HepG2 (cell line): ENCODE measurements at regions of chr18 and their contacts with region 1.

Region 1: GRCh38 chr18:27363872-27364271 is 178.8 kb upstream of the CHST9 start:
- DNase-seq: peak; percentile 10
- ATAC-seq: peak; percentile 58; the same call in 2 of the 3 replicates
- H3K4me3 ChIP-seq: no peak overlapping the region
- H3K27ac ChIP-seq: no peak overlapping the region
- H3K4me1 ChIP-seq: no peaks in the 10 kb centered on the region
- H3K27me3 ChIP-seq: no peaks in the 10 kb centered on the region
- CTCF ChIP-seq: peak; percentile 41
- EP300 ChIP-seq: no peak
- POLR2A ChIP-seq: no peak
- RAD21 ChIP-seq: no peak

Region 2: DNA sequence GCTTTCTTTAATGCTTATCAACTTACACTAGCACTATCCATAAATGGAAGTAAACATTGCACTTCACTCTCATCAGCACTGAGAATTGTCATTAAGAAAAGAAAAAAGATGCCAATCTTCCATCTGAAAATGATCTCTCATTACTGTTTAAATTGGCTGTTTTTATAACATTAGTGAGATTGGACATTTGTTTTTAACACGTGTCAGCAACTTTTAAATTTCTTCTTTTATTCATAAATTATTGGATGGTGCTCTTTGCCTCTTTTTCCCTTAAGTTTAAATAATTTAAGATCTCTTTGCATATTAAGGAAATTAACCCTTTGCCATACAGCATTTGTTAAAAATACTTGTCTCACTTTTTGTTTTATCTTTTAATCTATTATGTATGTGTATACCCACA is 32.3 kb before region 1 on chr18:
- CTCF ChIA-PET with region 1: no interaction called
- POLR2A ChIA-PET with region 1: no interaction called
- in situ Hi-C with region 1: no loop called
- intact Hi-C with region 1: loop called (anchors 1 kb)
- DNase-seq: no peak
- ATAC-seq: no peak
- H3K4me3 ChIP-seq: no peak overlapping the region
- H3K27ac ChIP-seq: no peak overlapping the region
- H3K4me1 ChIP-seq: no peaks in the 10 kb centered on the region
- H3K27me3 ChIP-seq: no peaks in the 10 kb centered on the region; a peak in 1 of 5 replicates
- CTCF ChIP-seq: no peak
- EP300 ChIP-seq: no peak
- POLR2A ChIP-seq: no peak
- RAD21 ChIP-seq: no peak